ENCODE measurements at regions of chr17 and their contacts with region 1.

Region 1: DNA sequence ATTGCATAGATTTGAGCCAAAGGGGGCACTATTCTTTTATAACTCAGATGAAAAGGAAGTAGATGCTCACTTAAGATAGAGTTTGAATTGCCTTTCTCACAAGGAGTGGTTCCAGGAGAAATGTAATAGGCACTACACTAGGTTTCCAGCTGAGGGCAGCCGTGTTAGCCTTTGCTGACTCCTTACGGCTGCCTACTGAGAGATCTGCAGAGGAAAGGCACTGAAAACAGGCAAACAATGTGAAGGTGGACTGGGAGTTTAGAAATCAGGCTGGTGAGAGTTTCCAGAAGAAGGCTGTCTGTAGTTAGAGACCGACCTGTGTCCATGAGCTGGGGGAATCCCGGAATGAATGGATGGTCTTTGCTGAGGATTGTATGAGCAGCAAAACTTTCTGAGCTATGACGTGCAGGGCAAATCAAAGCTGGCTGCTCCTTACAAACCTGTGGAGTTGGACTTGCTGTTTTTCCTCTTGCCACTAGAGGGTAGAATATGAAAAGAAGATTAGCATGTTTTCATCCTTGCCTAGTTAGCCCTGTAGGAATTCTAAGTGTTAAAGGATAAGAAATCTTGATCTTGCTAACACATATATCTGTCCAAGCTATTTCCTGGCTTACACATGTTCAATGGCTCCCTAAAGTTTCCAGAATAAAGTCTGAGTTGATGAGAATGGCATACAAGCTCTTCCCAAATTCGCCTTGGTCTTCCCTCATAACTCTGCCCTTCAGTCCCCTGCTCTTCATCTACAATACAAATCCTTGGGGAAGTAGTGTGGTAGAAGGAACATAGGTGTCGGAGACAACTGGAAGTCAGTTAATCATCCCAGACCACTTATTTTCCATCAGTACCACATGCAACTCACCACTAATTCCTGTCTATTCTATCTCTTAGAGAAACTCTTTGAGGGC is 20.1 kb upstream of the TAOK1 start:
- DNase-seq: peak; percentile 29
- ATAC-seq: peak; percentile 92
- H3K4me3 Mint-ChIP-seq: no peak overlapping the region
- H3K27ac Mint-ChIP-seq: no peak overlapping the region
- H3K4me1 Mint-ChIP-seq: no peaks in the 10 kb centered on the region
- H3K27me3 Mint-ChIP-seq: no peaks in the 10 kb centered on the region
- CTCF ChIP-seq: peak; percentile 46

Region 2: DNA sequence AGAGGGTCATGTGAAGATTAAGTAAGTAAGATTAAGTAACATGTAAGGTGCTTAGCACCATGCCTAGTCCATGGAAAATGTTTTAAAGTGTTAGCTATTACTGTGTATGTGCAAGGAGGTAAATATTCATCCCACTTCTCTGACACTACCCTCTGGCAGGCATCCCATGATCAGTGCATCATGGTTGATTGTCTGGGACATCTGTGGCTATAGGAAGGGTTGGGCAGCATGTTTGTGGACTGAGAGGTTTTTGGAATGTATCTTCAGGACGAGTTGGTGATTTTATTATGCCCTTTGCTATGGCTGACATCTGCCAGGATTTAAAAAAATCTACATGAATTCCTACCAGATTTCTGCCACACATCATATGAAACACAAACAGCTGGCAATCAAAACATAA is 13.6 kb after region 1 on chr17:
- CTCF ChIA-PET with region 1: interaction called, 13 read pairs
- POLR2A ChIA-PET with region 1: no interaction called
- intact Hi-C with region 1: no loop called
- DNase-seq: no peak
- ATAC-seq: no peak
- H3K4me3 Mint-ChIP-seq: no peak overlapping the region
- H3K27ac Mint-ChIP-seq: no peak overlapping the region
- H3K4me1 Mint-ChIP-seq: no peaks in the 10 kb centered on the region
- H3K27me3 Mint-ChIP-seq: no peaks in the 10 kb centered on the region
- CTCF ChIP-seq: no peak

Region 3: GRCh38 chr17:29389982-29390850 is 20.1 kb after region 1 on chr17 and contains the start of gene TAOK1:
- CTCF ChIA-PET with region 1: interaction called, 5 read pairs
- POLR2A ChIA-PET with region 1: interaction called, 7 read pairs
- intact Hi-C with region 1: loop called (anchors 1 kb)
- DNase-seq: peak; percentile 95
- ATAC-seq: peak; percentile 95
- H3K4me3 Mint-ChIP-seq: peak within 1 kb of the TSS; percentile 91
- H3K27ac Mint-ChIP-seq: peak within 1 kb of the TSS; percentile 93
- H3K4me1 Mint-ChIP-seq: peaks cover 41% of the 10 kb centered on the region
- H3K27me3 Mint-ChIP-seq: no peaks in the 10 kb centered on the region
- CTCF ChIP-seq: no peak
- total RNA-seq, gene TAOK1: 55.1 and 55.5 TPM in 2 replicates

Region 4: GRCh38 chr17:29400818-29401217 is 30.7 kb after region 1 on chr17:
- CTCF ChIA-PET with region 1: no interaction called
- POLR2A ChIA-PET with region 1: no interaction called
- intact Hi-C with region 1: no loop called
- DNase-seq: no peak
- ATAC-seq: no peak
- H3K4me3 Mint-ChIP-seq: no peak overlapping the region
- H3K27ac Mint-ChIP-seq: no peak overlapping the region
- H3K4me1 Mint-ChIP-seq: peaks cover 17% of the 10 kb centered on the region
- H3K27me3 Mint-ChIP-seq: no peaks in the 10 kb centered on the region
- CTCF ChIP-seq: no peak

Region 5: GRCh38 chr17:29469276-29469675 is 99.2 kb after region 1 on chr17:
- CTCF ChIA-PET with region 1: no interaction called
- POLR2A ChIA-PET with region 1: no interaction called
- intact Hi-C with region 1: no loop called
- DNase-seq: no peak
- ATAC-seq: no peak
- H3K4me3 Mint-ChIP-seq: no peak overlapping the region
- H3K27ac Mint-ChIP-seq: no peak overlapping the region
- H3K4me1 Mint-ChIP-seq: no peaks in the 10 kb centered on the region
- H3K27me3 Mint-ChIP-seq: no peaks in the 10 kb centered on the region
- CTCF ChIP-seq: no peak

Region 6: GRCh38 chr17:29533976-29534375 is 163.9 kb after region 1 on chr17:
- CTCF ChIA-PET with region 1: interaction called, 61 read pairs
- POLR2A ChIA-PET with region 1: no interaction called
- intact Hi-C with region 1: loop called (anchors 1 kb)
- DNase-seq: no peak
- ATAC-seq: no peak
- H3K4me3 Mint-ChIP-seq: no peak overlapping the region
- H3K27ac Mint-ChIP-seq: no peak overlapping the region
- H3K4me1 Mint-ChIP-seq: no peaks in the 10 kb centered on the region
- H3K27me3 Mint-ChIP-seq: no peaks in the 10 kb centered on the region
- CTCF ChIP-seq: no peak

Region 7: DNA sequence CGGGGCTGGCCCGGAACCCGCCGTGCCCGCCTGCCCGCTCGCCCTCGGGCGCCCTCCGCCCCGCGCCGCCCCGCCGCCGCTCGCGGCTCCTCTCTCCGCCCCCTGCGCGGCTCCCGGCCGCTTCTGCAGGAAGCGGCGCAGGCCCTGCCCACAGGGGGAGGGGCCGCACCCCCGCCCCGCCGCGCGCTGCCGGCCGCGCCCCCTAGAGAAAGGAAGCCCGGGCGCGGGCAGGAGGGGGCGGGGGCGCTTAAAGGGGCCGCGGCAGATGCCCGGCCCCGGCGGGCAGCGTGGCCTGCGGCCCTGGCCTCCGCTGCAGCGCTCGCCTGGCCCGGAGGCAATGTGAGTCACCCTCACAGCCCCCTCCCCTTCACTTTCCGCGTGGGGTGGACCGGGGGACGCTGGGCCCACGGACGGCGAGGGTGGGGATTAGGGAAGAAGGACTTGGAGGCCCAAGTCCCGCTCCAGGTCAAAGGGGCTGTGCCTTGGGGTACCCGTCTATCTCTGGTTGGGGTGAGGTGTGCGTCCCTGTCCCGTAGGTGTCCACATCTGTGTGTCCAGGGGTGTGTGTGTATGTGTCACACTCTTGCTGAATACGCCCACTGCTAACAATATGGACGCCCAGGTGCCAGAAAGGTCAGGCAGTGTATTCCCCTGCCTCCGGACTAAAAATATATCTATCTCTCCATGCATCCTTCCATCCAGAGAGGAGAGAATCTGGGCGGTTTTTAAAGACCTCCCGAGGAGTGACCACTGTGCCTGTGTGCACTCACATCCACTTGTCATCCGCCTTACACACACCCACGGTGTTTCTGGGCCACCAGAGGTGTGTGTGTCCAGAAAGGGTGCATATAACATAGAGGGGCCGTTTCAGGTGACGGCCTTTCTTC is 219.7 kb after region 1 on chr17 and contains the start of gene GIT1:
- CTCF ChIA-PET with region 1: interaction called, 16 read pairs
- POLR2A ChIA-PET with region 1: no interaction called
- intact Hi-C with region 1: loop called (anchors 1 kb)
- DNase-seq: peak; percentile 88
- ATAC-seq: peak; percentile 83
- H3K4me3 Mint-ChIP-seq: peak within 1 kb of the TSS; percentile 87
- H3K27ac Mint-ChIP-seq: peak within 1 kb of the TSS; percentile 83
- H3K4me1 Mint-ChIP-seq: peaks cover 73% of the 10 kb centered on the region
- H3K27me3 Mint-ChIP-seq: no peaks in the 10 kb centered on the region
- CTCF ChIP-seq: no peak
- total RNA-seq, gene GIT1: 41.7 and 45.3 TPM in 2 replicates

Measured in activated B cell treated with CpG ODN at 0.5 μM for 24 hours (primary cell).